Heart right ventricle (tissue), 16 donors: ENCODE measurements at regions of chr9 and their contacts with region 1.

Region 1: GRCh38 chr9:82036086-82036485 is 47.5 kb downstream of the SPATA31D1 start:
- DNase-seq: no peak
- ATAC-seq: no peak
- H3K4me3 ChIP-seq: no peak overlapping the region
- H3K27ac ChIP-seq: no peak overlapping the region
- H3K4me1 ChIP-seq: peaks cover 0 to 8% (median 0%) of the 10 kb centered on the region in 9 donors
- H3K27me3 ChIP-seq: no peaks in the 10 kb centered on the region
- CTCF ChIP-seq: no peak

Region 2: DNA sequence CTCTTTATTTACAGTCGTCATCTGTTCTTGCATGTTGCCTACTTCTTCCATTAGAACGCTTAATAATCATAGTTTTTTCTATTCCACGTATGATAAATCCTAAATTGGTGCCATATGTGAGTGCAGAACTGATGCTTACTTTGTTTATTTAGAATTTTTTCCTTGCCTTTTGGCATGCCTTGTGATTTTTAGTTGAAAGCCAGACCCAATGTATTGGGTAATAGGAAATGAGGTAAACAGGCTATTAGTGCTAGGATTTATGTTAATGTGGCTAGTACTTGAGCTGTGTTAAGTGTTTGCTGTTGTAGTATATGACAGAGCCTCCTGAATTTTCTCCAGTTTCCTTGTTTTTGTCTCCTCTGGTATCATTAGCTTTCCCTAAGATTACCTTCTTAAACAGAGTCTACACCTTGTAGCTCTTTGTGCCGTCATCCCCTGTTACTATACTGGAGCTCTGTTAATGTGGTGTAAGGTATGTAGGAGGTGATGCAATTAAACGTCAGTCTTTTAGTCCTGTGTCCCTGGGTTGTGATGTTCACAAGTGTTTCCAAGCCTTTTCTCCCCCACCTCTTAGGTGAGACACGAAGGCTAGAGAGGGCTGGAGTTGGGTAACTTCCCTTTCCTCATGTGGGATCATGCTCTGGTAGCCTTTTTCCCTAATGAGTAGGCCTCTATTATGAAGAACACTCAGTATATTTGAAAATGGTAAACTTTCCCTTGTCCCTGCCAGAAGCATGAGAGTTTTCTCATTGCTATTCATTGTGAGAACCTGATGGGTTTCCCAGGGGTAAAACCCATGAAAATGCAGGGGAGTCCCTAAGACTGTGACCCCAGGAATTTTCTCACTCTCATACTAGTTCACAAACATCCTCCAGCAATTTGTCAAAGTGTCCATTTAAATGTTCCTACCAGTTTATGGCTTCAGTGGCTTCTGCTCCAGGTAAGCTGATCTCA is 71.6 kb before region 1 on chr9:
- intact Hi-C with region 1: no loop called
- DNase-seq: no peak
- ATAC-seq: no peak
- H3K4me3 ChIP-seq: no peak overlapping the region
- H3K27ac ChIP-seq: no peak overlapping the region
- H3K4me1 ChIP-seq: no peaks in the 10 kb centered on the region
- H3K27me3 ChIP-seq: no peaks in the 10 kb centered on the region
- CTCF ChIP-seq: no peak

Region 3: GRCh38 chr9:82376677-82377232 is 340.7 kb after region 1 on chr9:
- intact Hi-C with region 1: loop called in 1 of 10 experiments (anchors 5 kb)
- DNase-seq: no peak
- ATAC-seq: no peak
- H3K4me3 ChIP-seq: no peak overlapping the region
- H3K27ac ChIP-seq: no peak overlapping the region
- H3K4me1 ChIP-seq: no peaks in the 10 kb centered on the region
- H3K27me3 ChIP-seq: no peaks in the 10 kb centered on the region
- CTCF ChIP-seq: no peak